SK-N-SH (cell line): ENCODE measurements at regions of chr1 and their contacts with region 1.

Region 1: GRCh38 chr1:169794530-169795416 is at the start of gene METTL18:
- DNase-seq: peak; percentile 86
- H3K4me3 ChIP-seq: peak within 1 kb of the TSS; percentile 70 to 98
- H3K27ac ChIP-seq: peak within 1 kb of the TSS; percentile 71 to 98
- H3K4me1 ChIP-seq: peaks cover 0 to 13% of the 10 kb centered on the region in 2 experiments; a peak in 2 of 4 replicates
- H3K27me3 ChIP-seq: no peaks in the 10 kb centered on the region
- CTCF ChIP-seq: no peak
- EP300 ChIP-seq: 0 out of 4 replicates have a peak, but pooled peaks of 1 of the 2 experiments have one; percentile 8
- RAD21 ChIP-seq: no peak
- polyA plus RNA-seq, gene METTL18: 1.7 and 2.3 TPM in 2 replicates

Region 2: GRCh38 chr1:169893494-169894362 is 99.0 kb after region 1 on chr1 and contains the start of gene SCYL3:
- CTCF ChIA-PET with region 1: no interaction called
- POLR2A ChIA-PET with region 1: interaction called, 15 read pairs
- DNase-seq: peak; percentile 92
- H3K4me3 ChIP-seq: peak within 1 kb of the TSS; percentile 90 to 95
- H3K27ac ChIP-seq: peak within 1 kb of the TSS; percentile 91 to 96
- H3K4me1 ChIP-seq: peaks cover 14 to 20% of the 10 kb centered on the region in 2 experiments; a peak in 3 of 4 replicates
- H3K27me3 ChIP-seq: no peaks in the 10 kb centered on the region
- CTCF ChIP-seq: no peak
- EP300 ChIP-seq: peak; percentile 15 to 21; a peak in 1 of 4 replicates
- RAD21 ChIP-seq: no peak
- polyA plus RNA-seq, gene SCYL3: 5.9 and 7.7 TPM in 2 replicates